ENCODE measurements at regions of chr16 and their contacts with region 1.

Region 1: DNA sequence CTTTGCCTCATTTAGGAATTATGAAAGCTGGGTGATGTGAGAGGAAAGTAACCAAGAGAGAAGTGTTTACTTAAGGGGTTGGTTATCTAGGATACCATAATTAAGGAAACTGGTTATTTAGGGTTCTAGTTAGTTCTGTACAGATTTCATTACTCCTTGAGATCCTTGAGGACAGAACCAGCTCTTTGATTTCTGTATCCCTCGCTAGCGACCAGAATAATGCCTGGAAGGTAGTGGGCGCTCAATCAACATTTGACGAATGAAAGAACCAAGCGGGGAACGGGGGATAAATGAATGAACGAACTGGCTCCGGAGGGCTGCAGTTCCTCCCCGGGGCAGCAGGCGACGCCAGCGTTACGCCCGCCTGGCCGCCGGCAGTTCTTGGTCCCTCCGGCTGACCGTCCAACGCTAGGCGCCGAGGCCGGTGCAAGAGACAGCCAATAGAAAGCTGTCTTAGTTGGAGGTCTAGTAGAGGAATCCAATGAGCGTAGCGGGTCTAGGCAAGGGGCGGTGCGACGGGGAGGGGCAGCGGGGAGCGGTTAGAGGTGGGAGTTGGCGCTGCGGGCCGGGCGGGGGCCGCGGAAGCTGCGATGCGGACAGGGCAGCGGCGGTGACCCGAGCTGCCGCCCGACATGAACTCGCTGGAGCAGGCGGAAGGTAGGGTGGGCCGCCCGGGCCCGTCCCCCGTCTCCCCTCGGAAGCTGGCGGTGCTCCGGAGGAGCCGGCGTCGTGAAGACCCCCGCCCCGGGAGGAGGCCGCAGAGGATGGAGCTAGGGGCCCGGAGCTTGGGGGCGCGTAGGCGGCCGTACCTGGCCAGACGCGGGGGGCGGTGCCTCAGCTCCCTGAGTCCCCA is at the start of gene CNEP1R1:
- DNase-seq: peak; percentile 94 to 97
- ATAC-seq: peak; percentile 100
- H3K4me3 ChIP-seq: peak within 1 kb of the TSS; percentile 100
- H3K27ac ChIP-seq: peak within 1 kb of the TSS; percentile 85
- H3K4me1 ChIP-seq: peaks cover 10% of the 10 kb centered on the region
- H3K27me3 ChIP-seq: no peaks in the 10 kb centered on the region
- CTCF ChIP-seq: peak; percentile 100
- total RNA-seq, gene CNEP1R1: 10.9 to 15.8 (median 14.8) TPM

Region 2: GRCh38 chr16:50065624-50066481 is 40.9 kb after region 1 on chr16 and contains the start of gene HEATR3:
- intact Hi-C with region 1: loop called in 1 of 2 experiments (anchors 2 kb)
- DNase-seq: peak; percentile 92 to 97
- ATAC-seq: peak; percentile 95 to 97 (median 96)
- H3K4me3 ChIP-seq: peak within 1 kb of the TSS; percentile 91
- H3K27ac ChIP-seq: peak within 1 kb of the TSS; percentile 94
- H3K4me1 ChIP-seq: peaks cover 22% of the 10 kb centered on the region
- H3K27me3 ChIP-seq: no peaks in the 10 kb centered on the region
- CTCF ChIP-seq: no peak
- total RNA-seq, gene HEATR3: 9.2 to 20.9 (median 13.4) TPM

Region 3: DNA sequence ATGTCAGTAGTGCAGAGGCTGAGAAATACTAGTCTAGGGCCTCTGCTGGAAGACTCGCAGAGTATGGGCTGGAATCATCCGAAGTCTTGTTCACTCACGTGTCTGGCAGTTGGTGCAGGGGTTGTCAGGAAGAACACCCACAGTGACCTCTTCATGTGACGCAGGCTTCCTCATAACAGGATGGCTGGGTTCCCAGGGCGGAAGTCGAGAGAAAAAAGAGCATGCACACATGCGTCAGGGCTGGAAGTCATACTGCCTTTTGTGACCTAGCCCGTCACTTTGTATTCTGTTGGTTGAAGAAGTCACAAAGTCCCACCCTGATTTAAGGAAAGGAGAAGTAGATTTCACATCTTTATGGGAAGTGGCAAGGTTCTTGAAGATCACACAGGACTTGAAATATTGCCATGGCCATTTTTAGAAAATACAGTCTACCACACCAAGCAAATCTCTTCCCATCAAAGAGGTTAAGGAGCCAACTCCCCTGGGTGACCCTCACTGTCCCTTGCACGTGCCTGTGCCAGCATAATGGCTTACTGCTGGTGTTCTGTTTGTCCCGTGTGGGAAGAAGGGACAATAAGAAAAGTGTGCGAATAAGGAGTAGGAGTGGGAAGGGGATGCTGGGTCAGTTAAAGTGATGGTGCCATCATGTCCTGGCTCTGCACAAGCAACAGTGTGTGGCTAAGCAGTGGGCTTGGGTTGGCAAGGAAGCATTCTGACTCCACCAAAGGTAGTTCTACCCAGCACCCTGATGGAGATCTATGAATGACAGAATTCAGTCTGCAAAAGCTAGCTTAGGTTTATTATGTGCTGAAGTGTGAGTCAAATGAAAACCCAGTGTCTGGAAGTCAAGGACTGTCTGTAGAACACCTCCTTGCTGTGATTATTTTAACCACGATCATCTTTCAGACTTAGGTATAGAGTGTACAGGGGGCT is 69.0 kb after region 1 on chr16:
- intact Hi-C with region 1: no loop called
- DNase-seq: peak; percentile 64 to 71
- ATAC-seq: peak in 3 of 4 donors; percentile 56 to 63 (median 61)
- H3K4me3 ChIP-seq: no peak overlapping the region
- H3K27ac ChIP-seq: peak overlapping the region; percentile 59
- H3K4me1 ChIP-seq: peaks cover 5% of the 10 kb centered on the region
- H3K27me3 ChIP-seq: no peaks in the 10 kb centered on the region
- CTCF ChIP-seq: no peak

Region 4: GRCh38 chr16:50338371-50339231 is 313.7 kb after region 1 on chr16:
- intact Hi-C with region 1: no loop called
- DNase-seq: no peak
- ATAC-seq: no peak
- H3K4me3 ChIP-seq: no peak overlapping the region
- H3K27ac ChIP-seq: no peak overlapping the region
- H3K4me1 ChIP-seq: peaks cover 9% of the 10 kb centered on the region
- H3K27me3 ChIP-seq: no peaks in the 10 kb centered on the region
- CTCF ChIP-seq: no peak

Region 5: DNA sequence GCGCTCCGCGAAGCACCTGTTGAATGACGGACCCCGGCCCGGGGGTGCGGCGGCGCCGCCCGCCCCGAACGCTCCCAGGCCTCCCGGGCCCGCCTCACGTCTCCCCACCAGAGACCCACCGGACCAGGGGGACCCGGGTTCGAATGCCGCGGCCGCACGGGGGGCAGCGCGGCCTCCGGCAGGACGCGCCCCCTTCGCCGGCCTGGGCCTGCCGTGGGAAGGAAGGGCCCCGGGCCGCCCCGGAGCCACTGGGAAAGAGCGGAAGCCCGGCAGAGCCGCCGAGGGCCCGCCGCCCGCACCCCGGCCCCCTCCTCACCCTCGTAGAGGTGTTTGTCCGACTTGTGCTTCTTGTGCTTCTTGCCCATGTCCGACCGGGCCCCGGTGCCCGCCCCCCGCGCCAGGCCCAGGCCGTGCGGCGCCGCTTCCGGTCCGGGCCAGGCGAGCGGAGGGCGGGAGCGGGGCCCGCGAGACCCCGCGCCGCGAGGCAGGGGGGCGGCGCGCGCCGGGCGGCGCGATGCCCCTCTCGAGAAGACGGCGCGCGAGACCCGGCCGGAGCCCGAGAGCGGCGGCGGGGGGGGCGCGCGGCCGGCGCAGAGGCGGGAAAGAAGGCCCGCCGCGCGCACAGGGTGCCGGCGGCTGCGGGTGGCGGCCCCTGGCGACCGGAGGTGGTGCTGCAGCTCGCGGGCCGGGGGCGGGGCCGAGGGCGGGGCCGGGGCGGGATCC is 343.7 kb after region 1 on chr16 and contains the start of gene BRD7:
- intact Hi-C with region 1: loop called in 1 of 2 experiments (anchors 10 kb)
- DNase-seq: peak; percentile 69 to 80
- ATAC-seq: peak; percentile 81 to 90 (median 84)
- H3K4me3 ChIP-seq: peak within 1 kb of the TSS; percentile 94
- H3K27ac ChIP-seq: peak within 1 kb of the TSS; percentile 82
- H3K4me1 ChIP-seq: peaks cover 22% of the 10 kb centered on the region
- H3K27me3 ChIP-seq: no peaks in the 10 kb centered on the region
- CTCF ChIP-seq: peak; percentile 77
- total RNA-seq, gene BRD7: 47.5 to 77.1 (median 52.4) TPM

Region 6: DNA sequence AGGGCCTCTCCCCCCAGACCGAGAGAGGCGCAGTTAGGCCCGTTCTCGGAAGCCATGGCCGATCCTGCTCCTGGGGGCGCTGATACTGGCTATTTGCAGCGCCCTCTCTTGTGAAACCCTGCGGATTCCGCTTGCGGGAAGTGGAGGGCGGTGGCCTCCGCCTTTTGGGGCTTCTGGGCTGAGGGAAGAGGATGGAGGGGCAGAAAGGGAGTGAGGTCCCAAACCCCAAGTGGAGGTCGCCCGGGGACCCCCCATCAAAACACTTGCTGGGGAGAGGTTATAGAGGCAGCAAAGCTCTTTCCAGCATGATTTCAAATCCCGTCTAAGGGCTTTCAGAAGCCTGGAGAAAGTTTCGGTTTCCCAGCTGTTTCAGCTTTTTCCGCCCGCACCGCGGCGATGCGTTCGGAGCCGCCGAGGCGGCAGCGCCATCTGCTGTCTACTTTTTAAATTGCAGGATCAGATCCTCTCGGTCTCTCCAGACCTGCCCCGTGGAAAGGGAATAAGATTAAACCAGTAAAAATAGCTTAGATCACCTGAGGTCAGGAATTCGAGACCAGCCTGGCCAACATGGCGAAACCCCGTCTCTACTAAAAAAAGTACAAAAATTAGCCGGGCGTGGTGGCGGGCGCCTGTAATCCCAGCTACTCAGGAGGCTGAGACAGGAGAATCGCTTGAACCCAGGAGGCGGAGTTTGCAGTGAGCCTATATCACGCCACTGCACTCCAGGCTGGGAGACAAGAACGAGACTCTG is 640.4 kb after region 1 on chr16:
- intact Hi-C with region 1: loop called in 1 of 2 experiments (anchors 10 kb)
- DNase-seq: peak; percentile 74 to 85
- ATAC-seq: peak; percentile 63 to 88 (median 76)
- H3K4me3 ChIP-seq: peak overlapping the region; percentile 68
- H3K27ac ChIP-seq: peak overlapping the region; percentile 60
- H3K4me1 ChIP-seq: peaks cover 16% of the 10 kb centered on the region
- H3K27me3 ChIP-seq: no peaks in the 10 kb centered on the region
- CTCF ChIP-seq: peak; percentile 88